Activated naive CD4-positive, alpha-beta T cell treated with anti-CD3 and anti-CD28 coated beads for 36 hours (primary cell): ENCODE measurements at regions of chr11 and their contacts with region 1.

Region 1: DNA sequence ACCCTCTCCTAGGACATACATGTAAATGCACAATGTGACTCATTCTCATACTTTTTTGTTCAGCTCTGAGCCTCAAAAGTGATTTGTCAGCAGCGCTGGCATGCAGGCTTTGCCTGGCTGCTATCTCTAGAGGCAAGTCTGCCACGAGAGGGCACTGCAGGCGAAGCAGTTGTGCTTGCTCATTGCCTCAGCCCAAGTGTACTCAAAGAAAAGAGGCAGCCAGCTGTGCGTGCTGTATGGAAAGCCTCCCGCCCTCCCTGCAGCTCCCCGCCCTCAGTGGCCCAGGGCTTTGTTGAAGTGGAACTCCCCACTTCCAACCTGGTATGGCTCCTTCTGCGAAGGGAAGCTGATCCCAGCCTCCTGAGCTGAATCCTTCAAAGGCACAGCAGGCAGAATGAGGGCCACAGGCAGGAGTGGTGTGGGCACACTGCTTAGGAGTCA is 16.3 kb downstream of the SDHAF2 start:
- DNase-seq: peak; percentile 96
- H3K4me3 Mint-ChIP-seq: no peak overlapping the region
- H3K27ac Mint-ChIP-seq: peak overlapping the region; percentile 38
- H3K4me1 Mint-ChIP-seq: peaks cover 27% of the 10 kb centered on the region
- H3K27me3 Mint-ChIP-seq: no peaks in the 10 kb centered on the region

Region 2: GRCh38 chr11:61392981-61393595 is 53.1 kb before region 1 on chr11:
- CTCF ChIA-PET with region 1: no interaction called
- intact Hi-C with region 1: no loop called
- DNase-seq: peak; percentile 37
- H3K4me3 Mint-ChIP-seq: peak overlapping the region; percentile 89
- H3K27ac Mint-ChIP-seq: peak overlapping the region; percentile 81
- H3K4me1 Mint-ChIP-seq: peaks cover 17% of the 10 kb centered on the region
- H3K27me3 Mint-ChIP-seq: no peaks in the 10 kb centered on the region

Region 3: DNA sequence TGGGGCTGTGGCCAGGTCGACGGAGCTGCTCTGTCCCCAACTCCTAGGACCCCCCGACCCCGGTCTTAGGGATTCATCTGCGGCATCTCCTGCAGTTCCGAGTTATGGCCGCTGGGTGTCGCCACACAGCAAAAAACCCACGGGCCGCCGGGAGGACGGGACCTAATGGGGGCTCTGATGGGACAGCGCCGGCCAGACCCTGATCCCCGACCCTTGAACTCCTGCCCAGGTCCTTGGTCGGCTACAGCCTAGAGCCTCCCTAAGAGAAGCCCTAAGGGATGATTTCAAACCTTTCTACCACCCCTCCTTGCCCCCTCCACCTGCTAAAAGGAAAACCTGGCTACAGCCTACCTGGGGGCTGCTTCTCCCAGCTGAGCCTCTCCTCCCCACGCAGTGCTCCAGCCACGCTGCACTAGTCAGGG is 31.5 kb after region 1 on chr11:
- CTCF ChIA-PET with region 1: interaction called, 24 read pairs
- intact Hi-C with region 1: loop called (anchors 2 kb)
- DNase-seq: peak; percentile 57
- H3K4me3 Mint-ChIP-seq: no peak overlapping the region
- H3K27ac Mint-ChIP-seq: no peak overlapping the region
- H3K4me1 Mint-ChIP-seq: peaks cover 10% of the 10 kb centered on the region
- H3K27me3 Mint-ChIP-seq: peaks cover 2% of the 10 kb centered on the region

Region 4: DNA sequence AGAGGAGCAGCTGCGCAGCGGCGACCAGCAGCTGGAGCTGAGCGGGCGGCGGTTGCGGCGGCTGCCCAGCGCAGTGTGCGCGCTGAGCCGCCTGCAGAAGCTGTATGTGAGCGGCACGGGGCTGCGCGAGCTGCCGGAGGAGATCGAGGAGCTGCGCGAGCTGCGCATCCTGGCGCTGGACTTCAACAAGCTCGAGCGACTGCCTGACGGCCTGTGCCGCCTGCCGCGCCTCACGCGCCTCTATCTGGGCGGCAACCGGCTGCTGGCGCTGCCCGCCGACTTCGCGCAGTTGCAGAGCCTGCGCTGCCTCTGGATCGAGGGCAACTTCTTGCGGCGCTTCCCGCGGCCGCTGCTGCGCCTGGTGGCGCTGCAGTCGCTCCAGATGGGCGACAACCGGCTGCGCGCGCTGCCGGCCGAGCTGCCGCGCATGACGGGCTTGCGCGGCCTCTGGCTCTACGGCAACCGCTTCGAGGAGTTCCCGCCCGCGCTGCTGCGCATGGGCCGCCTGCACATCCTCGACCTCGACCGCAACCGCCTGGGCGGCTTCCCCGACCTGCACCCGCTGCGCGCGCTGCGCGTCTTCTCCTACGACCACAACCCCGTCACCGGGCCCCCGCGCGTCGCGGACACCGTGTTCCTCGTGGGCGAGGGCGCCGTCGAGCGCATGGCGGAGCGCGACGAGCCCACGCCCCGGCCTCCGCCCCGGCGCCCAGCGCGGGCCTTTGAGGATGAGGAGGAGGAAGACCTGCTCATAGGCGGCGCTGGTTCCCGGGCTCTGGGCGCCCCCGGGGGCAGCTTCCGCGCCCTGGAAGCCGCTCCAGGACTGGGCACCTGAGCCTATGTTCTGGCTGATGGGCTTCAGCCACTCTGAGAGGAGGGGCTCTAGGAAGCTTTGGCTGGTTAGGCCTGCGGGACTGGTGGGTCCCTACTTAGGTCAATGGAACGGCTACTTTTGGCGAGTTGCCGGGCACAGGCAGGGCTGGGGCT is 63.1 kb after region 1 on chr11:
- CTCF ChIA-PET with region 1: interaction called, 5 read pairs
- intact Hi-C with region 1: loop called (anchors 2 kb)
- DNase-seq: peak; percentile 75
- H3K4me3 Mint-ChIP-seq: peak overlapping the region; percentile 18
- H3K27ac Mint-ChIP-seq: no peak overlapping the region
- H3K4me1 Mint-ChIP-seq: peaks cover 7% of the 10 kb centered on the region
- H3K27me3 Mint-ChIP-seq: peaks cover 47% of the 10 kb centered on the region

Region 5: DNA sequence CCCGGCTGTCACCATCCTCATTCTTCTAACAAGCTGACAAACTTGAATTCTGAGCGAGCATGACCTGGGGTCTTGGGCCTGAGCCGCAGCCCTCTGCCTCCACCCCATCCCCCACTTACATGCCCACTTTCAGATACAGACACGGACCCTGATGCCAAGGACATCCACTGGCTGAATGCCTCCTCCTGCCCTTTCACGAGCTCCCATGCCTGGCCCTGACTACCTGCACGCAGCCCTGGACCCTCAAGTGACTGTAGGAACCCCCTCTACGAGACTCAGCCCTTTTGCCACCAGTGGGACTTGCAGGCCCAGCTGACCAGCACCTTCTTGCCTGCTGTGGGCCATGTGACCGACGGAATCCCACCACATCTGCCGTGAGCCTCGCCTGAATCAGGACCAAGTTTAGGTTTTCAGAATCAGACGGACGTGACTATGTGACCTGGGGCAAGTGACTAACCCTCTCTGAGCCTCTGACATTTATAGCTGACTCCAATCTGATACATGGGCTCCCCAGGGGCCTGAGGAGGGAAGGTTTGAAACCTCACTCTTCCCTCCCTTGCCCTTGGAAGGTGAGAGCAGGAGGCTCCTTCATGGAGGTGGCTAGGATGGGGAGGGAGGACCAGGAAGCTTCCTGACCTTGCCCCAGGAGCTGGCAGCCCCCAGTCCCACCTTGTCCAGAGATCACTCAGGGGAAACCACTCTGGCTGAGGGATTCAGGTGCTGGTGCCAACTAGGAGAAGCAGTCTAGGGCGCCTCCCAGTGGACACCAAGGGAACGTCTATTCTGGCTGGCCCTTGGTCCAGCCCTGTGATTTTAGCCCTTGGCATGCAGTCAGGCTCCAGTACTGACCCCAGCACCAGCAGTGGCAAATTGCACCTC is 181.6 kb after region 1 on chr11:
- CTCF ChIA-PET with region 1: no interaction called
- intact Hi-C with region 1: loop called (anchors 1 kb)
- DNase-seq: peak; percentile 68
- H3K4me3 Mint-ChIP-seq: no peak overlapping the region
- H3K27ac Mint-ChIP-seq: no peak overlapping the region
- H3K4me1 Mint-ChIP-seq: no peaks in the 10 kb centered on the region
- H3K27me3 Mint-ChIP-seq: peaks cover 2% of the 10 kb centered on the region